ENCODE measurements at regions of chr1 and their contacts with region 1.

Region 1: GRCh38 chr1:82227306-82228095 is 426.8 kb downstream of the ADGRL2 start:
- DNase-seq: no peak
- H3K4me3 Mint-ChIP-seq: no peak overlapping the region
- H3K27ac Mint-ChIP-seq: no peak overlapping the region
- H3K4me1 Mint-ChIP-seq: no peaks in the 10 kb centered on the region
- H3K27me3 Mint-ChIP-seq: peaks cover 2% of the 10 kb centered on the region

Region 2: DNA sequence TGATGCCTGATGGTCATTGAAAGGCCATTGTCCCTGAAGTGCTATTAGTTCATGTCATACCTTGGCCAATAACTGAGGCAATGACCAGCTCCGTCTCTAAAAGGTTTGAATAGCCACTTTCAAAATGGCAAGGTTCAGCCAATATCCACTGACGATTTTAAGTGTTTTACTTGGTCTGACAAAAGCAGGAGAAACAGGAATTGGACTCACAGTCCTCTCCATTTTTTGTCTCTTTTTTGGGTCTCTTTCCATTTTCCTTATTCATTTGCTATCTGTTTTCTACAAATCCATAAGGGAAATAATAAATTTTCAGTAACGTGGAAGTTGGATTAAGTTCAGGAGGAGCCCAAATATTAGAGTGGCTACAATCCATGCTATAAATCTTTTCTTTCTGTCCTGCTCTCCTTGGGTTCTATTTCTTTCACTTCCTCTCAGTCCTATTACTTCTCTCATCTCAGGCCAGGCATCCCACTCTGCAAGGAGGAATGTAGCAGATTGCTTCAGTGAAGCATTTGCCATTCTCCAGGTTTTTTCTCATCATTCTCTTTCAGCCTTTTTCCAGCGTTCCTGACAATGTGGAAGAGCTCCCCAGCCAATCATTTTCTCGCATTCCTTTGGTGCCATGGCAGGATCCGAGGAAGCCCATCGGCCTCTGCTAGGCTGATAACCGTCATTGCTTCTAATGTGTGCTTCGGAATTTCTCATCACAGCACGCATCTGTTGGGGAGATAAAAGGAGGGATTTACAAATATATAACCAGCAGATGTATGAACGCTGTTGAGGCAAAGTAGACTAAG is 12.2 kb before region 1 on chr1:
- intact Hi-C with region 1: loop called (anchors 1 kb)
- DNase-seq: no peak
- H3K4me3 Mint-ChIP-seq: no peak overlapping the region
- H3K27ac Mint-ChIP-seq: no peak overlapping the region
- H3K4me1 Mint-ChIP-seq: no peaks in the 10 kb centered on the region
- H3K27me3 Mint-ChIP-seq: no peaks in the 10 kb centered on the region